ENCODE measurements at regions of chr1 and their contacts with region 1.

Region 1: DNA sequence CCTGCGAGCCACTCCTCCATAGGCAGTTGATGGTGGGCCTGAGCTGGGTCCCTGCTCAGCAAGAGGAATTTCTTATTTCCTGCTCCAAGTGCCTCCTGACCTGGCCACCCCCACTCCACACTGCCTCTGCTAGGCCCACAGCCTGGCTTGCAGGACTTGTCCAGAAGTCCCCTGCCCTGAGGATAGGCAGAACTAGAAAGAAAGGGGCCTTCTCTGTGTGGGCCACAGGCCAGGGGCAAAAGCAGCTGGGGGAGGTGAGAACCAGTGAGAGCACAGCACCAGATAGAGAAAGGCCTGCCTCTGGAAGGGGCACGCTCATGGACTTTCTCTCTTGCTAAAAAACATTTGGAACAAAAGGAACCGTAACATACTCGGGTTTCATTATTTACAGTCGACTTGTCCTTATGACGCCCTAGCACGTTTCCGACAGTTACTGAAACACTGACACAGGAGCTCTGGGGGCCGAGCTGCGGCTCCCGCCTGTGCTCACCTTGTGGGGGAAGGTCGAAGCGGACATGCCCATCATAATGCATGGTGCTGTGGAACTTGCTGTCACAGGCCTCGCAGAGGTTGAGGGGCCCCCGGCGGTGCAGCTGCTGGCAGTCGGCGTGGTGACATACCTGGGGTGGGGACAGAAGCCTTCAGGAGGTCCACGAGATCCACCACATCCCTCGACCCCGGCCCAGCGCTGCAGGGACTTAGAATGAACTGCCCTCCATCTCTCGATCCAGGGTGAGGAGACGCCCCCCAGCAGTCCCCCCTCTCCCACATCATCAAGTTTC is 11.3 kb upstream of the TNFRSF25 start:
- DNase-seq: no peak
- H3K4me3 ChIP-seq: no peak overlapping the region
- H3K27ac ChIP-seq: no peak overlapping the region
- H3K4me1 ChIP-seq: no peaks in the 10 kb centered on the region
- H3K27me3 ChIP-seq: peaks cover 0 to 11% (median 3%) of the 10 kb centered on the region in 5 experiments

Region 2: DNA sequence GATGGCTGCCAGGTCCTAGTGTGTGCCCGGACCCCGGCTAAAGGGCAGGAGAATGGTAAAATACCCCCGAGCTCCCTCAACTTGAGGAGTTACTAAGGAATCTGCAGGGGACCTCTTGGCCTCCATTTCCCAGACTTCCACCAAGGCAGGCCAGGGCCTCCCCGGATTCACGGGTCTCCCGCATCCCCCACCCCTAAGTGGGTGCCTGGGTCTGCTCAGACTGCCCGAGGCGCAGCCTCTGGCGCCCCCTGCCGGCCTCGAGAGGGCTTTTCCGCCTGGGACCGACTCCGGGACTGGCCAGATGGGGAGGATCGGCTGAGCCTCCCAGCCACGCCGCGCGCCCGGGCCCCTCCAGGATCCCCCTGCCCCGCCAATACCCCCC is 12.6 kb after region 1 on chr1:
- CTCF ChIA-PET with region 1: interaction called, 20 read pairs
- POLR2A ChIA-PET with region 1: no interaction called
- DNase-seq: peak; percentile 64 to 79 (median 75)
- H3K4me3 ChIP-seq: peak overlapping the region; percentile 53 to 82 (median 63)
- H3K27ac ChIP-seq: no peak overlapping the region
- H3K4me1 ChIP-seq: peaks cover 0 to 32% (median 26%) of the 10 kb centered on the region in 4 experiments
- H3K27me3 ChIP-seq: peaks cover 0 to 25% (median 7%) of the 10 kb centered on the region in 5 experiments

Measured in common myeloid progenitor, CD34-positive (primary cell).